Pancreas (tissue), 10 donors: ENCODE measurements at regions of chr13 and their contacts with region 1.

Region 1: GRCh38 chr13:53151336-53152056 is 122.9 kb downstream of the OLFM4 start:
- DNase-seq: peak in 4 of 6 donors; percentile 33 to 59 (median 39)
- ATAC-seq: peak; percentile 72 to 92 (median 86)
- H3K4me3 ChIP-seq: no peak overlapping the region
- H3K27ac ChIP-seq: no peak overlapping the region
- H3K4me1 ChIP-seq: no peaks in the 10 kb centered on the region
- H3K27me3 ChIP-seq: no peaks in the 10 kb centered on the region
- CTCF ChIP-seq: peak; percentile 69 to 78 (median 71)

Region 2: GRCh38 chr13:52975161-52975560 is 176.3 kb before region 1 on chr13:
- intact Hi-C with region 1: loop called in 1 of 3 experiments (anchors 10 kb)
- DNase-seq: no peak
- ATAC-seq: no peak
- H3K4me3 ChIP-seq: no peak overlapping the region
- H3K27ac ChIP-seq: no peak overlapping the region
- H3K4me1 ChIP-seq: peaks cover 0 to 8% (median 0%) of the 10 kb centered on the region in 3 donors
- H3K27me3 ChIP-seq: no peaks in the 10 kb centered on the region
- CTCF ChIP-seq: no peak

Region 3: GRCh38 chr13:53104136-53104535 is 47.4 kb before region 1 on chr13:
- intact Hi-C with region 1: no loop called
- DNase-seq: no peak
- ATAC-seq: no peak
- H3K4me3 ChIP-seq: no peak overlapping the region
- H3K27ac ChIP-seq: no peak overlapping the region
- H3K4me1 ChIP-seq: peaks cover 0 to 16% (median 7%) of the 10 kb centered on the region in 3 donors
- H3K27me3 ChIP-seq: no peaks in the 10 kb centered on the region
- CTCF ChIP-seq: no peak

Region 4: DNA sequence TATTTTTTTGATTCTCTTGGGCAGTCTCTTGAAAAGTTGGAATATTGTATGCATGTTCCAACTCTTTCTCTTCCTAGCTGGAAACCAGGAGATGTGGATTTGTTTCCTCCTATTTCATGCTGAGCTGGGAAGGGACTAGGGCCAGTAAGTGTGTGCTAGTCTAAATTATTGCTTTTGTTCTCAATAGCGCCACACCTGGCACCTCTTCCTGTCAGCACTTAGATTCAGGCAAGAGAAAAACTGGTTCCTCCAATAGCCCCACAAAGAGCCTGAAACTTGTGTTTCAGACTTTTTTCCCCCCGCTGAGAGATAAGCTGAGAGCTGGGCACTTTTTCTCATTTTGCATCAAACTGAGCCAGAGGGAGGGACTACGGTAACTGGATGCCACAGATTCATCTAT is 230.5 kb after region 1 on chr13:
- intact Hi-C with region 1: no loop called
- DNase-seq: no peak
- ATAC-seq: no peak
- H3K4me3 ChIP-seq: no peak overlapping the region
- H3K27ac ChIP-seq: no peak overlapping the region
- H3K4me1 ChIP-seq: no peaks in the 10 kb centered on the region
- H3K27me3 ChIP-seq: no peaks in the 10 kb centered on the region
- CTCF ChIP-seq: no peak